A549 (cell line): ENCODE measurements at regions of chr20 and their contacts with region 1.

Region 1: GRCh38 chr20:9407805-9408421 is 106.5 kb upstream of the LAMP5 start:
- DNase-seq: peak; percentile 71 to 77
- ATAC-seq: peak; percentile 94 to 97
- H3K4me3 ChIP-seq: no peak overlapping the region
- H3K27ac ChIP-seq: no peak overlapping the region
- H3K4me1 ChIP-seq: peaks cover 16% of the 10 kb centered on the region; the same call in 2 of the 3 replicates
- CTCF ChIP-seq: peak; percentile 97
- EP300 ChIP-seq: no peak
- POLR2A ChIP-seq: no peak
- RAD21 ChIP-seq: peak; percentile 95 to 97

Region 2: DNA sequence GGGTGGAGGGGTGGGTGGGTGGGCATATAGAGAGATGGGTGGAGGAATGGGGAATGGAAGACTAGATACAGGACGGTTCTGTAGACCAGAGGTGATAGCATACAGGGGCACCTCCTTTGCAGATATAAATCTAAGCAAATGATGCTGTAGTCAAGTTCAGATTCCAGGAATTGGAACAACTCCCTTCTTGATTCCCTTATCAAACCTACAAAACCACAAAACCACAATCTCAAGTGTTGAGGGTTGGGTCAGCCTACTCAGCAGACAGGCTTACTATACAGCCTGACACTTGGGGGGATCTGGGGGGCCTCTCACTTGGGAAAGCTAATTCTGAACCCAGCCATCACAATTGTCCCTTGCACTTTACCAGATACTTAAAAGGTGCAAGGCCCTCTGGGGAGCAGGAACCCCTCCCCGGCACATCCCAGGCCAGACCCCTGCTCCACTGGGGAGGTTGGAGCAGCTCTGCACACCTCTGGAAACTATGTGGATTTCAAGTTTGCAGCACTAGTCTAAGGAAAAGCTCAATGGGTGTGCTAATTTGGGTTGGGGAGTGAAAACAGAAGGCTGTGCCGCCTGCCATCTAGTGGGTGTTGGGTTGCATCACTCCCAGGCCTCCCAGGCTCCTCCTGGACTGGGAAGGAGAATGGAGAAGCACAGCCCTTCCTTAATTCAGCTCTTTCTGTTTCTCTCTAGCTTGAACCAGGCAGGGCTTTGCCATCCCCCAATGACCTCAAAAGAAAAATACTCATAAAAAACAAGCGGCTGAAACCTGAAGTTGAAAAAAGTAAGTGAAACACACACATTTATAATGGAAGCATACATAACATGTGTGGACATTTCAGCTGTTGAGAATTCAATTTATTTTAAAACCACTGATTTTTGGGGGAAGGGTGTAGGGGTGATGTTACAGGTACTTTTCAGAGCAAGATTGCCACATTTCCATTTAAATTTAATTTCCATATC is 14.7 kb before region 1 on chr20:
- CTCF ChIA-PET with region 1: interaction called, 31 read pairs
- POLR2A ChIA-PET with region 1: no interaction called
- DNase-seq: peak; percentile 62 to 73
- ATAC-seq: peak; percentile 96 to 98
- H3K4me3 ChIP-seq: no peak overlapping the region
- H3K27ac ChIP-seq: 0 out of 6 replicates have a peak overlapping the region, but pooled peaks of 1 of the 2 experiments have one; percentile 26
- H3K4me1 ChIP-seq: 0 out of 3 replicates have a peak, but pooled peaks cover 4% of the 10 kb centered on the region
- CTCF ChIP-seq: peak; percentile 86
- EP300 ChIP-seq: no peak
- POLR2A ChIP-seq: no peak
- RAD21 ChIP-seq: peak; percentile 85 to 91

Region 3: DNA sequence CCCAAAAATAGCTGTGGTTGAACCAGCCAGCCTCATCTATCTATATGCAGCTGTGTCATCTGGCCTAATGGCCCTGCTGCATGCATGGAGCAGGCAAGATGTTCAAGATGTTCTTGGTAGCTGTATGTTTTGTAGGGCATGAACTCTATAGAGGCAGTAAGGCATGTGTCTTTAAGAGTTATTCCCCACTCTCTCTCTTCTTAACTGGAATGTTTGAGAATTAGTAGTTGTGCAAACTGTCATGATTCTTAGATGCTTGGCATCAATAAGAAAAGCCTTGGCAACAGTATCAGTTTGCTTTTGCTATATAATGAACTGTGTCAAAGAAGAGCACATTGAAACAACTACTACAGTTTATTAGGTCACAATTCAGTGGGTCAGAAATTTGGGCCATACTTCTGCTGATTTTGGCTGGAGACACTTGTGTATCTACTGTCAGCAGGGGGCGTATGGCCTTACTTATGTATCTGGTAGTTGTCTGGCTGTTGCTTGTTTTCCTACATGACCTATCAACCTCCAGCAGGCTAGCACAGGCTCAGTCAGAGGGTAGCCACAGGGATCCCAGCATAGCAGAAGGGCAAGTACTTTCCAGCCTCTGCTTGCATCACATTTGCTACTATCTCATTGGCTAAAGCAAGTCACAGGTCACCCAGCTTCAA is 50.4 kb after region 1 on chr20:
- CTCF ChIA-PET with region 1: interaction called, 10 read pairs
- POLR2A ChIA-PET with region 1: no interaction called
- DNase-seq: peak; percentile 4 to 38
- ATAC-seq: peak in 1 of 2 experiments; percentile 57; a peak in 3 of 6 replicates
- H3K4me3 ChIP-seq: no peak overlapping the region
- H3K27ac ChIP-seq: no peak overlapping the region
- H3K4me1 ChIP-seq: peaks cover 13% of the 10 kb centered on the region
- CTCF ChIP-seq: no peak; the same call in 2 of the 3 replicates
- EP300 ChIP-seq: no peak
- POLR2A ChIP-seq: no peak
- RAD21 ChIP-seq: peak in 1 of 2 experiments; percentile 40; a peak in 2 of 5 replicates

Region 4: GRCh38 chr20:9565910-9566550 is 158.1 kb after region 1 on chr20:
- CTCF ChIA-PET with region 1: interaction called, 11 read pairs
- POLR2A ChIA-PET with region 1: no interaction called
- DNase-seq: no peak
- ATAC-seq: no peak
- H3K4me3 ChIP-seq: no peak overlapping the region
- H3K27ac ChIP-seq: no peak overlapping the region
- H3K4me1 ChIP-seq: no peaks in the 10 kb centered on the region
- CTCF ChIP-seq: no peak
- EP300 ChIP-seq: no peak
- POLR2A ChIP-seq: no peak
- RAD21 ChIP-seq: no peak

Region 5: DNA sequence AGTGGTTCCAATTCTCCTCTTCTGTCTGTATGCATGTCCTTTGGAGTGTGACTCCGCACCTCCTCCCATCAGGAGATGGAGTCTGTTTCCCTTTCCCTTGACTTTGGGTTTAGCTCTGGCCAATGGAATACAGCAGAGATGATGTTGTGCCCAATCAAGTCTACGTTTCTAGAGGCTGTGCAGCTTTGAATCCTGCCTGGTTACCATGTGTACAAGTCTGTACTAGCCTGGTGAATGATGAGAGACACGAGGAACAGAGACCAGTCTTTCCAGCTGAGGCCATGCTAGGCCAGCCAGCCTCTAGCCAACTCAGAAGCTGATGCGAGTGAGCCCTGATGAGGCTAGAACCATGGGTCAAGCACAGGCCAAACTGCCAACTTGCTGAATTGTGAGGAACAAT is 189.6 kb after region 1 on chr20:
- CTCF ChIA-PET with region 1: interaction called, 100 read pairs
- POLR2A ChIA-PET with region 1: no interaction called
- DNase-seq: no peak
- ATAC-seq: no peak
- H3K4me3 ChIP-seq: no peak overlapping the region
- H3K27ac ChIP-seq: peak overlapping the region; percentile 46 to 53; a peak in 4 of 6 replicates
- H3K4me1 ChIP-seq: peaks cover 31% of the 10 kb centered on the region
- CTCF ChIP-seq: no peak
- EP300 ChIP-seq: no peak
- POLR2A ChIP-seq: no peak
- RAD21 ChIP-seq: no peak

Region 6: DNA sequence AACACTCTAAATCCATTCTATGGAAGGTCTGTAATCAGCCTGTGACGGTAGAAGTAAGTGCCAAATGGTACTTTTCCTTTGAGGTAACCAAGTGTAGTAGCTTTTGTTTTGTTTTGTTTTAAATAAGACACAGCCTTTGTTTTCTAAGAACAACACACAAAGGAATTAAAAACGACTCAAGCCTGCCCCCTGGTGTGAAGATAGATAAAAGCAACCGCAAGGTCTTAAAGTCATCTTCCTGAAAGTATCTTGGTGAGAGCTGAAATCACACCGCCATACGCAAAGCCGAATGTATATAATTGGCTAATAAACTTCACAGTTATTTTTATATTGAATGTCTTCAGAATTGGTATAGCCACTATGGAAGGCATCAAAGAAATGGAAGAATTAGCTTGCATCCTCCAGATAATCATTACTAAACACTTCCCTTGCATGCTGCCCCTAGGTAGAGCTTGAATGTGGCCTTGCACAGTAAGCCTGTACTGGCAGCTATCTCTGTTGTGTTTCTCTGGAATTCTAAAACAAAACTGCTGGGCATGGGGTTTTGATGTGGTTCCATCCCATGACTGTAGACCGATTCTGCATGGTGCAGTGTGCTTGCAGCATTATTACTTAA is 202.1 kb after region 1 on chr20:
- CTCF ChIA-PET with region 1: interaction called, 385 read pairs
- POLR2A ChIA-PET with region 1: interaction called, 16 read pairs
- DNase-seq: peak in 1 of 2 experiments; percentile 83
- ATAC-seq: peak; percentile 65 to 85; a peak in 5 of 6 replicates
- H3K4me3 ChIP-seq: no peak overlapping the region
- H3K27ac ChIP-seq: peak overlapping the region in 1 of 2 experiments; percentile 5; a peak in 1 of 6 replicates
- H3K4me1 ChIP-seq: no peaks in the 10 kb centered on the region
- CTCF ChIP-seq: peak; percentile 97
- EP300 ChIP-seq: no peak
- POLR2A ChIP-seq: no peak
- RAD21 ChIP-seq: peak; percentile 96 to 98